HCT116 (cell line): ENCODE measurements at regions of chr1 and their contacts with region 1.

Region 1: GRCh38 chr1:39408641-39409054 is 82.8 kb upstream of the BMP8A start:
- DNase-seq: peak; percentile 84
- ATAC-seq: peak; percentile 89
- H3K4me3 ChIP-seq: peak overlapping the region; percentile 60 to 70
- H3K27ac ChIP-seq: peak overlapping the region; percentile 69; the same call in 1 of the 2 replicates
- H3K4me1 ChIP-seq: peaks cover 48 to 62% of the 10 kb centered on the region in 2 experiments
- H3K27me3 ChIP-seq: no peaks in the 10 kb centered on the region
- CTCF ChIP-seq: no peak
- POLR2A ChIP-seq: no peak
- RAD21 ChIP-seq: no peak

Region 2: DNA sequence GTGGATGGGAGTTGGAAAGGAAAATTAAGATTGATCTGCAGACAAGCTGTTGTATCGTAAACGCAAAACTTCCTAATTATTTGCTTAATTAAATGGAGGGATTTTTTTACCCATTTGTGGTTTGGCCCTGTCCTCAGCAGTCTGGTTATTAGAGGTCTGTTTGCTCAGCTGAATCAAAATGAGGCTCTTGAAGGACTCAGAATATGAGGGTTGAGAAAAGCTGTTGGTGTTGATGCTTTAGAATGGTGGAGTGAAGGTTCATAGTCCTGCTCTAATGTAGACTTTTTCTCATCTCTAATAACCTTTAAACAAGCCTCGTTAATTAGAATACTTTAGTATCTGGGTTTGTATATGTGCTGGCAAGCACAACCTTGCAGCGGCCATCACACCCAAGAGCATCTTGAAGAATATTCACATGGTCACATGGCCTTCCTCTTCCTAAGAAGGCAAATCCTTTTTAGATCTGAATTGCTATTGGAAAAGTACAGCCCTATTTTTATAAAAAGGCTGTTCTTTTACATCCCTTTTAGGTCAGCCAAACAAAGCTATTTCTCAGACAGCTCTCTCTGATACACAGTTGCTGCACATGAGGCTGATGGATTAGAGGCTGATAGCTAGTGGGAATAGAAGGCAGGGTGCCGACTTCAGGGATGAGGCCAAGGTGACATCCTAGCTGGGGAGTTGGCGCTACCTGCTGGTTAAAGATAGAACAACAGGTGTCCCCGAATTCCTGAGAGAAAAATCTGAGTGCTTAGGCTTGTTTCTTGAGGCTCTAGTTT is 150.3 kb before region 1 on chr1:
- CTCF ChIA-PET with region 1: interaction called, 3 read pairs
- POLR2A ChIA-PET with region 1: no interaction called
- RAD21 ChIA-PET with region 1: no interaction called
- intact Hi-C with region 1: loop called (anchors 2 kb)
- DNase-seq: peak; percentile 55
- ATAC-seq: peak; percentile 90
- H3K4me3 ChIP-seq: no peak overlapping the region
- H3K27ac ChIP-seq: no peak overlapping the region
- H3K4me1 ChIP-seq: peaks cover 0 to 3% of the 10 kb centered on the region in 2 experiments; a peak in 1 of 4 replicates
- H3K27me3 ChIP-seq: no peaks in the 10 kb centered on the region
- CTCF ChIP-seq: peak; percentile 84 to 92 (median 92)
- POLR2A ChIP-seq: no peak
- RAD21 ChIP-seq: peak; percentile 98

Region 3: DNA sequence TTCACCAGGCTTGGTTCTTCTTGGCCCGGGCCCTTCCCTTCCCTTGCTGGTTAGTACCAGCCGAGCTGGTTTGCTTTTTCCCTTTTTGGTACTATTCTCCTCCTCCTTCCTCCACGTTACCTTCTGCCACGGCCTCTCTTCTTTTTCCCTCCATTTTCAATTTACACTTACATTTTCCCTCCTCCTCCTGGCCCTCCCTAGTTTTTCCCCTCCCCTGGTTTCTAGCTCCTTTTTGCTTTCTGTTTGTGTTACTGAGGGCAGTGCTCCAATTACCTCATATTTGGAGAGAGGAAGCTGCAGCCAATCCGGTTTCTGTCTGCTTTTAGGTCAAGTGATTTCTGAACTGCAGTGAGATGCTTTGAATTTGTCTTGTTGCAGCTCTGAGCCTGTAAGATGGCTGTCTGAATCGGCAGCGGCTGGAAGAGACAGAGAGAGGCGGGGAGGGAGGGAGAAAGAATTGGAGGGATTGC is 140.5 kb before region 1 on chr1:
- CTCF ChIA-PET with region 1: interaction called, 11 read pairs
- POLR2A ChIA-PET with region 1: no interaction called
- RAD21 ChIA-PET with region 1: interaction called in 1 of 2 experiments, 3 read pairs
- intact Hi-C with region 1: loop called (anchors 2 kb)
- DNase-seq: no peak
- ATAC-seq: no peak
- H3K4me3 ChIP-seq: no peak overlapping the region
- H3K27ac ChIP-seq: no peak overlapping the region
- H3K4me1 ChIP-seq: no peaks in the 10 kb centered on the region; a peak in 1 of 4 replicates
- H3K27me3 ChIP-seq: no peaks in the 10 kb centered on the region
- CTCF ChIP-seq: no peak
- POLR2A ChIP-seq: no peak
- RAD21 ChIP-seq: no peak

Region 4: DNA sequence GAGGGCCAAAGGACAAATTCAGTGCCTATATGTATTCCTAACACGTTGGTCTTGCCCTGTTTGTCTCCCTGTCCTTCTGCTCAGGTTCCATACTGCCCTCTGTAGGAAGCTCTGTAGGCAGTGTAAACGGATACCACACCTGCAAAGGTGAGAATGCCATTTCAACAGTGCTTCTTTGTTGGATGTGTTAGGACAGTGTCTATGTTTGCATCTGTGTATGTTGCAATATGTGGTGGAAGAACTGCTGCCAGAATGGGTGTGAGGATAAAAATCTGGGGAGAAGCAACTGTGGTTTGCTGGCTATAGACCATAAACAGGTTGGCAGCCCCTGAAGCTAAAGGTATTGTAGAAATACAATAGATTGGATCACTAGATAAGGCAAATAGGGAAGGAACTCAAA is 30.3 kb before region 1 on chr1:
- CTCF ChIA-PET with region 1: interaction called, 11 read pairs
- POLR2A ChIA-PET with region 1: no interaction called
- RAD21 ChIA-PET with region 1: no interaction called
- intact Hi-C with region 1: no loop called
- DNase-seq: no peak
- ATAC-seq: peak; percentile 99
- H3K4me3 ChIP-seq: no peak overlapping the region
- H3K27ac ChIP-seq: no peak overlapping the region
- H3K4me1 ChIP-seq: peaks cover 4 to 8% of the 10 kb centered on the region in 2 experiments; a peak in 3 of 4 replicates
- H3K27me3 ChIP-seq: no peaks in the 10 kb centered on the region
- CTCF ChIP-seq: peak; percentile 50 to 87 (median 84); a peak in 5 of 6 replicates
- POLR2A ChIP-seq: no peak
- RAD21 ChIP-seq: peak; percentile 69

Region 5: DNA sequence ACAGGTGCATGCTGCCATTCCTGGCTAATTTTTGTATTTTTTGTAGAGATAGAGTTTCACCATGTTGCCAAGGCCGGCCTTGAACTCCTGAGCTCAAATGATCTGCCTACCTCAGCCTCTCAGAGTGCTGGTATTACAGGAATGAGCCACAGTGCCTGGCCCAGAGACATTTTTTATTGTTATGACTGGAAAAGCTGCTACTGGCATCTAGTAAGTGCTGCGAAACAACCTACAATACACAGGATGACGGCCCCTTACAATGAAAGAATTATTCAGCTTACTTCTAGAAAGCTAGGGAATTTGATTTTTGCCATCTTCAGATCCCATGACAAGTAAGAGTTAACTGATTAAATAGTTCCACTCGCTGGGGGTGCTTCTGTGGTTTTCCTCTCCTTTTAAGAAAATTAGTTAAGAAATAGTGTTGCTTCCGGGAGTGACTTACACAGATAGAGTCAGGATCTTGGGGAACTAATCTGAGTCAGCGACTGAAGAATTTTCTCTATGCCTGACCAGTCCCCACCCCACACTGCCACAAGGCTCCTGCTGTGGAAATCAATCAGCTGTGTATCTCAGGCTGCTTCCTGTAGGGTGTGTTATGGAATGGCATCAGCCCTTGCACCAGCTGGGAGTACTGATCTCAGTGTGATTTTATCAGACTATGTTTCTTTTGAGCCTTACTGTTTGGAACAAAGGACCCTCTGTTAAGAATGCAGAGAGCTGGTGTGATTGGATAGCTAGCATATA is 10.2 kb before region 1 on chr1:
- CTCF ChIA-PET with region 1: interaction called, 12 read pairs
- POLR2A ChIA-PET with region 1: interaction called, 21 read pairs
- RAD21 ChIA-PET with region 1: interaction called in 1 of 2 experiments, 6 read pairs
- intact Hi-C with region 1: no loop called
- DNase-seq: peak; percentile 98
- ATAC-seq: peak; percentile 86
- H3K4me3 ChIP-seq: peak overlapping the region; percentile 15 to 50; a peak in 2 of 4 replicates
- H3K27ac ChIP-seq: peak overlapping the region; percentile 91
- H3K4me1 ChIP-seq: peaks cover 67 to 78% of the 10 kb centered on the region in 2 experiments
- H3K27me3 ChIP-seq: no peaks in the 10 kb centered on the region
- CTCF ChIP-seq: no peak
- POLR2A ChIP-seq: no peak
- RAD21 ChIP-seq: peak; percentile 30

Region 6: GRCh38 chr1:39434797-39435395 is 26.2 kb after region 1 on chr1:
- CTCF ChIA-PET with region 1: no interaction called
- POLR2A ChIA-PET with region 1: no interaction called
- RAD21 ChIA-PET with region 1: no interaction called
- intact Hi-C with region 1: no loop called
- DNase-seq: no peak
- ATAC-seq: no peak
- H3K4me3 ChIP-seq: no peak overlapping the region
- H3K27ac ChIP-seq: no peak overlapping the region
- H3K4me1 ChIP-seq: no peaks in the 10 kb centered on the region
- H3K27me3 ChIP-seq: no peaks in the 10 kb centered on the region
- CTCF ChIP-seq: no peak
- POLR2A ChIP-seq: no peak
- RAD21 ChIP-seq: no peak